T-cell (primary cell): ENCODE measurements at regions of chr5 and their contacts with region 1.

Region 1: GRCh38 chr5:69404659-69405330 is 10.1 kb upstream of the MARVELD2 start:
- DNase-seq: no peak
- ATAC-seq: no peak
- H3K4me3 ChIP-seq: no peak overlapping the region
- H3K4me3 Mint-ChIP-seq: no peak overlapping the region
- H3K27ac ChIP-seq: no peak overlapping the region
- H3K27ac Mint-ChIP-seq: no peak overlapping the region
- H3K4me1 ChIP-seq: no peaks in the 10 kb centered on the region
- H3K4me1 Mint-ChIP-seq: no peaks in the 10 kb centered on the region
- H3K27me3 ChIP-seq: no peaks in the 10 kb centered on the region
- H3K27me3 Mint-ChIP-seq: no peaks in the 10 kb centered on the region

Region 2: GRCh38 chr5:68534131-68534940 is 870.5 kb before region 1 on chr5:
- CTCF ChIA-PET with region 1: no interaction called
- POLR2A ChIA-PET with region 1: no interaction called
- DNase-seq: no peak
- ATAC-seq: no peak
- H3K4me3 ChIP-seq: no peak overlapping the region
- H3K4me3 Mint-ChIP-seq: no peak overlapping the region
- H3K27ac ChIP-seq: no peak overlapping the region
- H3K27ac Mint-ChIP-seq: no peak overlapping the region
- H3K4me1 ChIP-seq: no peaks in the 10 kb centered on the region
- H3K4me1 Mint-ChIP-seq: no peaks in the 10 kb centered on the region
- H3K27me3 ChIP-seq: peaks cover 0 to 13% of the 10 kb centered on the region in 2 experiments
- H3K27me3 Mint-ChIP-seq: peaks cover 32 to 41% of the 10 kb centered on the region in 2 donors

Region 3: DNA sequence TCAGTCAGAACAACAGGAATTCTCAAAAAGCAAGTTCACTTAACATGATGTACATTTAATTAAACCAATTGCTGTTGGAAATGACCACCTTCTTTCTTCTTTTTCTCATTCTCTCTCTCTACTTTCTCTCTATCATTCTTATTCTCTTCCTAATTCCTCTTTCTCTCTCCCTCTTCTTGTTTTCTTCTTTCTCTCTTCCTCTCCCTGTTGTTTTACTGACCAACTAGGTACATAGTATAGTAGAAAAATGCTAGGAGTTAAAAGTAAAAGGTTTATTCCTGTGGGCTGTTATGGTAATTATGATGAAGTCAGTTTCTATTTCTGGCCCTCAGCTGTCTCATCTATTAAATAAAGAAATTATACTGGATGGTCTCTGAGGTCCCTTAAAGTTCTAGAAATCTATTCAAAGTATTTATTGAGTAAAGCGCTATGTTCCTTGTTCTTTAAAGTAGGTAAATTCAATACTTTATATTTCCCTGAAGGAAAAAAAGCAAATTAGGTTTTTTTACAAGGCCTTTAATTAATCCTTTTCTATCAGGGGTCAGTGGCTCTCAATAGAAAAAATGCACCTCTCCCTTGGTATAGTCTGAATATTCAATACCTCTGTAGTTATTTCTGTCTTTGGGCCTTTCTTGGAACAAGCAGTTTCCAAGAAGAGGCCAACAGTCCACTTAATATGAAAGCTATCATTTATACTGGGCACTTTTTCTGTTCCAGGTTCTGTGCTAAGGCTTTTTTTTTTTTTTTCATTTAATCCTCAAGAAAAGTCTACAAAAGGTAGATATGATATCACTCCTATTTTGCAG is 413.3 kb before region 1 on chr5:
- CTCF ChIA-PET with region 1: no interaction called
- POLR2A ChIA-PET with region 1: interaction called in 1 of 2 experiments, 13 read pairs
- DNase-seq: no peak
- ATAC-seq: no peak
- H3K4me3 ChIP-seq: no peak overlapping the region
- H3K4me3 Mint-ChIP-seq: no peak overlapping the region
- H3K27ac ChIP-seq: no peak overlapping the region
- H3K27ac Mint-ChIP-seq: no peak overlapping the region
- H3K4me1 ChIP-seq: no peaks in the 10 kb centered on the region
- H3K4me1 Mint-ChIP-seq: peaks cover 0 to 3% (median 0%) of the 10 kb centered on the region in 3 donors
- H3K27me3 ChIP-seq: no peaks in the 10 kb centered on the region
- H3K27me3 Mint-ChIP-seq: peaks cover under 1 to 3% of the 10 kb centered on the region in 2 donors

Region 4: GRCh38 chr5:69450116-69450515 is 45.3 kb after region 1 on chr5:
- CTCF ChIA-PET with region 1: no interaction called
- POLR2A ChIA-PET with region 1: no interaction called
- DNase-seq: no peak
- ATAC-seq: no peak
- H3K4me3 ChIP-seq: no peak overlapping the region
- H3K4me3 Mint-ChIP-seq: no peak overlapping the region
- H3K27ac ChIP-seq: no peak overlapping the region
- H3K27ac Mint-ChIP-seq: no peak overlapping the region
- H3K4me1 ChIP-seq: no peaks in the 10 kb centered on the region
- H3K4me1 Mint-ChIP-seq: peaks cover 0 to 4% (median 0%) of the 10 kb centered on the region in 3 donors
- H3K27me3 ChIP-seq: peaks cover 0 to 9% of the 10 kb centered on the region in 2 experiments
- H3K27me3 Mint-ChIP-seq: no peaks in the 10 kb centered on the region